ENCODE measurements at regions of chr2 and their contacts with region 1.

Region 1: DNA sequence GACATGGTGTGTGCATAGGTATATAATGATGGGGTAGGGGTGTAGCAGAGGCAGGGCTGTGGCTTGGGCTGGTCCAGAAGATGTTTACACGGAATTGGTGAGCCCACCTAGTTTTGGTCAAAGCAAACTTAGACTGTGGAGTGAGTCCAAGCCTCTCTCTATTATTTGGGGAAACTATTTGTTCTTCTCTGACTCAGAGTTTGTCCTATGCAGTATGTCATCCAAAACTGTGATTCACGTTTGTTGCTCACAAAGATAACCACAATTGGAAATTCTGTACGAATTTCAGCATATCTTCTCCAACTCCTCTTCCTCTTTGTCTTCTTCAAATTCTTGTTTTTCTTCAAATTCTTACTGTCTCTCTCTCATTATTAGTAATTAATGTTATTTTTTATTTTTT is 292.9 kb downstream of the XIRP2 start:
- DNase-seq: peak; percentile 48
- H3K4me3 Mint-ChIP-seq: no peak overlapping the region
- H3K27ac Mint-ChIP-seq: no peak overlapping the region
- H3K4me1 Mint-ChIP-seq: peaks cover 7% of the 10 kb centered on the region
- H3K27me3 Mint-ChIP-seq: no peaks in the 10 kb centered on the region
- CTCF ChIP-seq: no peak

Region 2: GRCh38 chr2:167140767-167141166 is 40.4 kb before region 1 on chr2:
- CTCF ChIA-PET with region 1: no interaction called
- POLR2A ChIA-PET with region 1: no interaction called
- intact Hi-C with region 1: loop called (anchors 2 kb)
- DNase-seq: peak; percentile 91
- H3K4me3 Mint-ChIP-seq: no peak overlapping the region
- H3K27ac Mint-ChIP-seq: no peak overlapping the region
- H3K4me1 Mint-ChIP-seq: peaks cover 13% of the 10 kb centered on the region
- H3K27me3 Mint-ChIP-seq: no peaks in the 10 kb centered on the region
- CTCF ChIP-seq: no peak

Region 3: GRCh38 chr2:167249197-167249596 is 68.1 kb after region 1 on chr2:
- CTCF ChIA-PET with region 1: no interaction called
- POLR2A ChIA-PET with region 1: no interaction called
- intact Hi-C with region 1: no loop called
- DNase-seq: no peak
- H3K4me3 Mint-ChIP-seq: no peak overlapping the region
- H3K27ac Mint-ChIP-seq: no peak overlapping the region
- H3K4me1 Mint-ChIP-seq: no peaks in the 10 kb centered on the region
- H3K27me3 Mint-ChIP-seq: no peaks in the 10 kb centered on the region
- CTCF ChIP-seq: no peak

Measured in MCF 10A (cell line).